WTC11 (cell line): ENCODE measurements at regions of chr20 and their contacts with region 1.

Region 1: GRCh38 chr20:34768096-34768495 is 57.4 kb downstream of the NCOA6 start:
- DNase-seq: no peak
- ATAC-seq: no peak
- H3K4me3 Mint-ChIP-seq: no peak overlapping the region
- H3K27ac Mint-ChIP-seq: no peak overlapping the region
- H3K4me1 Mint-ChIP-seq: no peaks in the 10 kb centered on the region
- H3K27me3 Mint-ChIP-seq: no peaks in the 10 kb centered on the region
- CTCF ChIP-seq: no peak

Region 2: DNA sequence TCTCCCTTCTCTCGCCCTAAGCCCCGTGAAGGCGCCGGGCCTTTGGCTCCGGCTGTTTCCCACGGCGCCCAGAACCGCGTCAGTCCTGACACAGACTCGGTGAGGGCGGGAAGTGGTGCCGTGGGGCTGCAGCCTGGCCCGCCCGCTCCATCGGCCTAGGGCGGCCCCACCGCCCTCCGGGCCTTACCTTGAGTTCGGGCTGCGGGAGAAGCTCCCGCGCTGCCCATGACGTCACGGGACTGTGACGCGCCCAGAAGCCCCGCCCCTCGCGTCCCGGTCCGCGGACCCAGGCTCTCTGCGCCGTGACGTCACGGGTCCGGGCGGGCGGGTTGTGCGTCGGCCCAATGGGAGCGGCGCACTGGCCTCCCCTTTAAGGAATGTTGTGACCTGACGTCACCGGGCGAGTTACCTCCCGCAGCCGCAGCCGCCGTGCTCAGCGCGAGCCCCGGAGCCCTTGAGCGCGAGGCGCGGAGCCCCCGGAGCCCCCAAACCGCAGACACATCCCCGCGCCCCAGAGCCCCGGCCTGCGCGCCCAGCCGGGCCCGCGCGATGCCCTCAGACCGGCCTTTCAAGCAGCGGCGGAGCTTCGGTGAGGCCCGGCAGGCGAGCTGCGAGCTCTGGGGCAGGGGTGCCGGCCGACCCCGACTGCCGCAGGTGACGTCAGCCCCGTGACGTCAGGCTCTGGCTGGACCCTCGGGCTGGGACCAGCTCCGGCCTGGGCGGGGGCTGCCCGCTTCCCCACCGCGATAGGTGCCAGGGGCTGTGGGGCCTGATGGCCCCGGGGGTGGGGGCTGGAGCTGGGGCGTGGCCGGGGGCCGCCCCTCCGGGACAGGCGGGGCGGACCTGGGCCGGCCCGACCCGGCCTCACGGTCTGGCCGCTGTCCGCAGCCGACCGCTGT is 209.5 kb before region 1 on chr20 and contains the start of gene MAP1LC3A:
- CTCF ChIA-PET with region 1: interaction called, 14 read pairs
- POLR2A ChIA-PET with region 1: no interaction called
- DNase-seq: peak; percentile 95
- ATAC-seq: peak; percentile 75
- H3K4me3 Mint-ChIP-seq: peak within 1 kb of the TSS; percentile 75
- H3K27ac Mint-ChIP-seq: peak within 1 kb of the TSS; percentile 44
- H3K4me1 Mint-ChIP-seq: peaks cover 4% of the 10 kb centered on the region
- H3K27me3 Mint-ChIP-seq: peaks cover 7% of the 10 kb centered on the region
- CTCF ChIP-seq: no peak
- total RNA-seq, gene MAP1LC3A: 7.5 to 12.1 TPM (median 11.3 TPM) in 3 replicates

Region 3: GRCh38 chr20:34747479-34747878 is 20.6 kb before region 1 on chr20:
- CTCF ChIA-PET with region 1: interaction called, 13 read pairs
- POLR2A ChIA-PET with region 1: no interaction called
- DNase-seq: no peak
- ATAC-seq: no peak
- H3K4me3 Mint-ChIP-seq: no peak overlapping the region
- H3K27ac Mint-ChIP-seq: no peak overlapping the region
- H3K4me1 Mint-ChIP-seq: no peaks in the 10 kb centered on the region
- H3K27me3 Mint-ChIP-seq: no peaks in the 10 kb centered on the region
- CTCF ChIP-seq: no peak

Region 4: GRCh38 chr20:34781220-34781619 is 13.1 kb after region 1 on chr20:
- CTCF ChIA-PET with region 1: interaction called, 29 read pairs
- POLR2A ChIA-PET with region 1: no interaction called
- DNase-seq: no peak
- ATAC-seq: no peak
- H3K4me3 Mint-ChIP-seq: no peak overlapping the region
- H3K27ac Mint-ChIP-seq: no peak overlapping the region
- H3K4me1 Mint-ChIP-seq: no peaks in the 10 kb centered on the region
- H3K27me3 Mint-ChIP-seq: no peaks in the 10 kb centered on the region
- CTCF ChIP-seq: no peak

Region 5: DNA sequence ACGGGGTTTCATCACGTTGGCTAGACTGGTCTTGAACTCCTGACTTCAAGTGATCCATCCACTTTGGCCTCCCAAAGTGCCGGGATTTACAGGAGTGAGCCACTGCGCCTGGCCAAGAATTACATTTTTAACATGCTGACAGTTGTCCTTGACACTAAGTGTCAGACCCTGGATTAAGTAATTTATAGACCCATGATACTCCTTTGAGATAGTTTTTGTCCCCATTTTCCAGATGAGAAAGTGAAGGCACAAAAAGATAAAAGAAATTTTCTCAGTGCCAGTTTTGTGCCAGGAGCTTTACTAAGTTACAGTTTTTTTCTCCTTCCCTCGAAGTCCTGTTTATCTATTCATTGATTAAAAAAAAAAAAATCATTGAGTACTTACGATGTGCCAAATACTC is 388.9 kb after region 1 on chr20:
- CTCF ChIA-PET with region 1: no interaction called
- POLR2A ChIA-PET with region 1: no interaction called
- DNase-seq: no peak
- ATAC-seq: no peak
- H3K4me3 Mint-ChIP-seq: no peak overlapping the region
- H3K27ac Mint-ChIP-seq: no peak overlapping the region
- H3K4me1 Mint-ChIP-seq: no peaks in the 10 kb centered on the region
- H3K27me3 Mint-ChIP-seq: no peaks in the 10 kb centered on the region; the same call in 1 of the 2 replicates
- CTCF ChIP-seq: no peak